Left cardiac atrium (tissue), 4 donors: ENCODE measurements at regions of chr7 and their contacts with region 1.

Region 1: DNA sequence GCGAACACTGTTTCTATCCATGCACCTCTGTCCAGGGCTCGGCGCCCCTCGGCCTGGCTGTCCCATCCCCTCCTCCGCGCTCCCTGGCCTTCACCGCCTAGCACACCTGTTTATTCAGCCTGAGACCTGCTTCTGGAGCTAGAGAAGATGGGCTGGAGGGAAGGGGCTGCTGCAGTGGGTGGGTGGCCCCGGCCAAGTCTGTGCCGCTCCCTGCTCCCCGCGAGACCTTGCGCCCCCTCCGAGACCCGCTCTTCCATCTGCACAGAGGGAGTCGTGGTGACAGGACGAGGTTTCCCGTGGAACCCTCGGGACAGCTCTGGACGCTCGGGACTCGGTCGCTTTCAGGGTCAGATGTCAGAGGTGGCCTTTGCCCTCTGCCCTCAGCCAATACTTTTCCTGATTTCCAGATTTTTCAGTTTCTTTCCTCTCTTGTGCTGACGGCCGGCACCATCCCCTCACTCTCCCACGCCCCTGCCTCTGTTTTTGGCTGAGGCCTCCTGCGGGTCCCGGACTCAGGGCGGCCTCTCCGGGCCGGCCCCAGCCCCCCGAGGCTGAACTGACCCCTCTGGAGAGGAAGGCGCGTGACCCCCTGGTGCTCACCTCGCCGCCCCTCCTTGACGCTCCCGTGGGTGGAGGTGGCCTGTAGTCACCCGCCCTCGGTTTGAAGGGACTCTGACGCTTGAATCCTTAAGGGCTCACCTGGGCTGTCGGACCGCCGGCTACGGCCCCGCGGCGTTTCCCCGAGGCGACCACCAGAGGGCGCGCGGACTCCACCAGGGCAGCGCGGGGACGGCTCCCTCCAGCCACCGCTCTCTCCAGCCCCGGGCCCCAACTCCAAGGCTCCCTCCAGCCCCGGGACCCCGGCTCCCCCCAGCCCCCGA is 15.6 kb downstream of the SHH start:
- DNase-seq: peak; percentile 54
- ATAC-seq: peak; percentile 69 to 74

Region 2: GRCh38 chr7:155702616-155703015 is 94.0 kb before region 1 on chr7:
- intact Hi-C with region 1: no loop called
- DNase-seq: no peak
- ATAC-seq: no peak

Region 3: GRCh38 chr7:156764016-156764669 is 967.5 kb after region 1 on chr7:
- intact Hi-C with region 1: loop called in 1 of 2 experiments (anchors 10 kb)
- DNase-seq: peak; percentile 74
- ATAC-seq: peak; percentile 93 to 97

Region 4: GRCh38 chr7:156816943-156817572 is 1020.4 kb after region 1 on chr7:
- intact Hi-C with region 1: loop called in 1 of 2 experiments (anchors 10 kb)
- DNase-seq: no peak
- ATAC-seq: no peak